ENCODE measurements at regions of chr13 and their contacts with region 1.

Region 1: GRCh38 chr13:41668130-41668757 is 210.9 kb downstream of the RGCC start:
- DNase-seq: peak; percentile 84
- ATAC-seq: peak; percentile 80
- H3K4me3 ChIP-seq: no peak overlapping the region
- H3K27ac ChIP-seq: no peak overlapping the region
- H3K4me1 ChIP-seq: peaks cover 24% of the 10 kb centered on the region
- H3K27me3 ChIP-seq: no peaks in the 10 kb centered on the region
- CTCF ChIP-seq: peak; percentile 81

Region 2: GRCh38 chr13:40922437-40923040 is 745.7 kb before region 1 on chr13:
- CTCF ChIA-PET with region 1: no interaction called
- POLR2A ChIA-PET with region 1: no interaction called
- intact Hi-C with region 1: no loop called
- DNase-seq: no peak
- ATAC-seq: no peak
- H3K4me3 ChIP-seq: no peak overlapping the region
- H3K27ac ChIP-seq: no peak overlapping the region
- H3K4me1 ChIP-seq: peaks cover 7% of the 10 kb centered on the region
- H3K27me3 ChIP-seq: no peaks in the 10 kb centered on the region
- CTCF ChIP-seq: no peak

Region 3: DNA sequence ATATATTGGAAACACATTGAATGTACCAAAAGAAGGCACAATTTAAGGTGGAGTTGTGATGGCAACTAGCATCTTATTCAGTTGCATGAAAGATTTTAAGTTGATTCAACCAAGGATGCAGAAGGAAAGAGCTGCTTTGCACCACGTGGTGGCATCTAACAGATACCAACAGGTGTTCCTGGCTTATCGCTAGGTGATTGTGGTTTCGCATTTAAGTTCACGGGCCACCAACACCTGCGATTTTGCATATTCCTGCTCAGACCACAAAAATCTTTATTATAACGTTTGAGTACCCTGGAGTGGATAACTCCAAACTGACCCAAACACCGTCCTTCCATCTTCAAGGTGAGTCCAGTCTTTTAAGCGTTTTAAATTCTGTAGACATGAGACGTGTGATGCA is 165.6 kb before region 1 on chr13:
- CTCF ChIA-PET with region 1: no interaction called
- POLR2A ChIA-PET with region 1: no interaction called
- intact Hi-C with region 1: no loop called
- DNase-seq: no peak
- ATAC-seq: no peak
- H3K4me3 ChIP-seq: no peak overlapping the region
- H3K27ac ChIP-seq: no peak overlapping the region
- H3K4me1 ChIP-seq: peaks cover 8% of the 10 kb centered on the region; the same call in 1 of the 2 replicates
- H3K27me3 ChIP-seq: no peaks in the 10 kb centered on the region
- CTCF ChIP-seq: no peak

Region 4: GRCh38 chr13:41716236-41716635 is 48.0 kb after region 1 on chr13:
- CTCF ChIA-PET with region 1: no interaction called
- POLR2A ChIA-PET with region 1: no interaction called
- intact Hi-C with region 1: loop called (anchors 1 kb)
- DNase-seq: no peak
- ATAC-seq: no peak
- H3K4me3 ChIP-seq: no peak overlapping the region
- H3K27ac ChIP-seq: no peak overlapping the region
- H3K4me1 ChIP-seq: no peaks in the 10 kb centered on the region
- H3K27me3 ChIP-seq: no peaks in the 10 kb centered on the region
- CTCF ChIP-seq: no peak

Region 5: DNA sequence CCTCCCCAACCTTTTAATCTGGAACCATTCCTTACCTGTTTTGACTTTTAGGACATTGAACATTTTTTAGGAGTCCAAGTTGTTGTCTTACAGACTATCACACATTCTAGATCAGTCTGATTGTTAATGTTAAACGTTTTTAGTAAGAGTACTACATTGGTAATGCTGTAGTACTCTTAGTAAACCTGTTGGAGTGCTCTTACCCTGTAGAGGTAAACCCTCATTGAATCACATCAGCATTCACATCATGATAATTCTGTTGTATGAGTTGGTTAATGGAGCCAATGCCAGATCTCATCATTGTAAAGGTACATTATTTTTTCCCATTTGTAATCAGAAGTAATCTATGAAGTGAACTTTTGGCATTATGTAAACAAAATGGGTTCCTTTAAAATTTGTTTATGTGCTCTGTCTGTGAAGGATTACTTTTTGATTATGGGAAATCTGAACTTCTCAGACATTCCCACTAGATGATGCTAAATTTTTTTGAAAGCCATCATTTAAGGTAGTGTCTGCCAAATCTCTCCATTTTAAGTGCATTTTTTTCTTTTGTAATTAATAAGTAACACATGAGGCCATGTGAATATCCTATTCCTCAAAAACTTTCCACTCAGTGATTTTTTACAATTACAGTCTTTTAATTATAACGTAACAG is 237.5 kb after region 1 on chr13:
- CTCF ChIA-PET with region 1: no interaction called
- POLR2A ChIA-PET with region 1: no interaction called
- intact Hi-C with region 1: loop called (anchors 10 kb)
- DNase-seq: peak; percentile 54
- ATAC-seq: peak; percentile 85
- H3K4me3 ChIP-seq: no peak overlapping the region
- H3K27ac ChIP-seq: no peak overlapping the region
- H3K4me1 ChIP-seq: no peaks in the 10 kb centered on the region
- H3K27me3 ChIP-seq: no peaks in the 10 kb centered on the region
- CTCF ChIP-seq: peak; percentile 72

Region 6: DNA sequence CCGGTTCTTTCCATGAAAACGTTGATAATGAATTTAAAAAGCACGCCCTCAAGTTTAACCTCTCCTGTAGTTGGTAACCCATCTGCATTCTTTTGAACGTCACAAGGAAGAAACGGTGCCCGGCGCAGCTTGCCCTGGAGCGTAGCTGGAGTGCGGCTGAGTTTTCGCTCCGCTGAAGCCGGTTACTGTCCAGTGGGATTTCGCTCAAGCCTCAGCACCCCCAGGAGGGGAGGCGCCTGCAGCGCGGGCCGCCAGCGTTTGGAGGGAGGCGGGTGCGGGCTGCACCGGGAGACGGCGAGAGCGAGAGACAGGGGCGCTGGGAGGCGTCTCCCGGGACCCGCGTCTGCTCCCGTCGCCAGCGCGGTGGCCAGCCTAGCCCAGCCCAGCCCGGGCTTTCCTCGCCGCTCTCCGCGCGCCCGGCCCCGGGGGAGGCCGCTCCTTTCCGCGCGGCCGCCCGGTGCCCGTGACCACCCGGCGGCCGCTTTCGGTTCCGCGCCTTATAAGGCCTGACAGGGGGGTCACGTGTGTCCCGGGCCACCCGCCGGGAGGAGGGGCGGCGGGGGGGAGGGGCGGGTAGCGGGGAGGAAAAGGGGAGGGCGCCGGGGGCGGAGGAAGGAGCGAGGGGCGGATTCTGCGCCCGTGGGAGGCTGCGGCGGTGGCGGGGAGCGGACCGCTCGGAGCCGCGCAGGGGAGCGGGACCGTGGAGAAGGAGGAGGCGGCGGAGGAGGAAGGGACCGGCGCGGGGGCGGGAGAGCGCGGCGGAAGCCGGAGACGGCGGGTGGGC is 371.9 kb after region 1 on chr13:
- CTCF ChIA-PET with region 1: no interaction called
- POLR2A ChIA-PET with region 1: no interaction called
- intact Hi-C with region 1: loop called (anchors 5 kb)
- DNase-seq: peak; percentile 76
- ATAC-seq: peak; percentile 61
- H3K4me3 ChIP-seq: peak overlapping the region; percentile 77
- H3K27ac ChIP-seq: peak overlapping the region; percentile 67
- H3K4me1 ChIP-seq: peaks cover 22% of the 10 kb centered on the region
- H3K27me3 ChIP-seq: no peaks in the 10 kb centered on the region
- CTCF ChIP-seq: no peak

Region 7: GRCh38 chr13:42215578-42216421 is 547.6 kb after region 1 on chr13:
- CTCF ChIA-PET with region 1: interaction called, 4 read pairs
- POLR2A ChIA-PET with region 1: no interaction called
- intact Hi-C with region 1: loop called (anchors 1 kb)
- DNase-seq: peak; percentile 53
- ATAC-seq: peak; percentile 80
- H3K4me3 ChIP-seq: no peak overlapping the region
- H3K27ac ChIP-seq: no peak overlapping the region
- H3K4me1 ChIP-seq: peaks cover 20% of the 10 kb centered on the region
- H3K27me3 ChIP-seq: no peaks in the 10 kb centered on the region
- CTCF ChIP-seq: peak; percentile 77

Measured in PC-3 (cell line).